Prostate gland (tissue), 2 donors: ENCODE measurements at regions of chr12 and their contacts with region 1.

Region 1: GRCh38 chr12:95532851-95533250 is 18.4 kb downstream of the USP44 start:
- DNase-seq: no peak
- H3K4me3 ChIP-seq: no peak overlapping the region
- H3K27ac ChIP-seq: no peak overlapping the region
- H3K4me1 ChIP-seq: no peaks in the 10 kb centered on the region
- H3K27me3 ChIP-seq: no peaks in the 10 kb centered on the region
- CTCF ChIP-seq: no peak
- POLR2A ChIP-seq: no peak

Region 2: GRCh38 chr12:95117178-95117599 is 415.7 kb before region 1 on chr12:
- intact Hi-C with region 1: loop called (anchors 10 kb)
- DNase-seq: peak; percentile 78
- H3K4me3 ChIP-seq: no peak overlapping the region
- H3K27ac ChIP-seq: peak overlapping the region; percentile 30 to 36
- H3K4me1 ChIP-seq: peaks cover 3% of the 10 kb centered on the region
- H3K27me3 ChIP-seq: no peaks in the 10 kb centered on the region
- CTCF ChIP-seq: peak; percentile 47 to 93 (median 88)
- POLR2A ChIP-seq: no peak

Region 3: DNA sequence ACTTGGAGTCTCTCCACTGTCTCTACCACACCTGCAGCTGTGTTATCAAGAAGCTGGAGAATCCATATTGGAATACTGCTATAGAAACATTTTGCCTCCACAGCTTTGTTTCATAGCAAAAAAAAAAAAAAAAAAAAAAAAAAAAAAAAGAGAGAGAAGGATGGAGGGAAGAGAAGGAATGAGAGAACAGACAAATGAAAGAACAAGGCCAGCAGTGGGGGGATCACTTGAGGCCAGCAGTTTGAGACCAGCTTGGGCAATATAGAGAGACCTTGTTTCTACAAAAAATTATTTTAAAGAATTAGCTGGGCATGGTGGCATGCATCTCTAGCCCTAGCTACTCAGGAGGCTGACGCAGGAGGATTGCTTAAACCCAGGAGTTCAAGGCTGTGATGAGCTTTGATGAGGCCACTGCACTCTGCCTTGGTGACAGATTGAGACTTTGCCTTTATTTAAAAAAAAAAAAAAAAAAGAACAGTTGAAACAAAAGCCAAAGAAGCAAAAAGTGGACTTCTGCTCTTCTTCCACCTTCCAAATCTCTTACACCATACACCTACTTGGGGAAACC is 307.1 kb before region 1 on chr12:
- intact Hi-C with region 1: no loop called
- DNase-seq: no peak
- H3K4me3 ChIP-seq: no peak overlapping the region
- H3K27ac ChIP-seq: no peak overlapping the region
- H3K4me1 ChIP-seq: no peaks in the 10 kb centered on the region
- H3K27me3 ChIP-seq: no peaks in the 10 kb centered on the region
- CTCF ChIP-seq: no peak
- POLR2A ChIP-seq: no peak

Region 4: DNA sequence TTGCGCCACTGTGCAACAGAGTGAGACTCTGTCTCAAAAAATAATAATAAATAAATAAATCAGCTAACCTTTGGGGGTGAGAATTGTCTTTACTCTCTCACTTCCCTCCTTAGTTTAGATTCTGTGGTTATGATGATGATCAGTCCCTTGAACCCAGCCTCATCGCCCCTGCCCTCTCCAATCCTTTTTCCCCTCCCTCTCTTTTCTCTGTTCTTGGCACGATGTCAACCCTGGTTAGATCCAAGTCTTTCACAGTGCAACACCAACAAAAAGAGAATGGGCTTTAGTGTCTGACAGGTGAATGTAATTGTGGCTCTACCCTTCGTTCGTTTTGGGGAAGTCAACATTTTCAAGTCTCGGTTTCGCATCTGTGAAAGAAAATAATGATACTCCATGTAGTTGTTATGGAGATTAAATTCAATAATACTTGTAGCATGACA is 198.7 kb after region 1 on chr12:
- intact Hi-C with region 1: no loop called
- DNase-seq: no peak
- H3K4me3 ChIP-seq: no peak overlapping the region
- H3K27ac ChIP-seq: no peak overlapping the region
- H3K4me1 ChIP-seq: no peaks in the 10 kb centered on the region
- H3K27me3 ChIP-seq: no peaks in the 10 kb centered on the region
- CTCF ChIP-seq: no peak
- POLR2A ChIP-seq: no peak